ENCODE measurements at regions of chr14 and their contacts with region 1.

Region 1: DNA sequence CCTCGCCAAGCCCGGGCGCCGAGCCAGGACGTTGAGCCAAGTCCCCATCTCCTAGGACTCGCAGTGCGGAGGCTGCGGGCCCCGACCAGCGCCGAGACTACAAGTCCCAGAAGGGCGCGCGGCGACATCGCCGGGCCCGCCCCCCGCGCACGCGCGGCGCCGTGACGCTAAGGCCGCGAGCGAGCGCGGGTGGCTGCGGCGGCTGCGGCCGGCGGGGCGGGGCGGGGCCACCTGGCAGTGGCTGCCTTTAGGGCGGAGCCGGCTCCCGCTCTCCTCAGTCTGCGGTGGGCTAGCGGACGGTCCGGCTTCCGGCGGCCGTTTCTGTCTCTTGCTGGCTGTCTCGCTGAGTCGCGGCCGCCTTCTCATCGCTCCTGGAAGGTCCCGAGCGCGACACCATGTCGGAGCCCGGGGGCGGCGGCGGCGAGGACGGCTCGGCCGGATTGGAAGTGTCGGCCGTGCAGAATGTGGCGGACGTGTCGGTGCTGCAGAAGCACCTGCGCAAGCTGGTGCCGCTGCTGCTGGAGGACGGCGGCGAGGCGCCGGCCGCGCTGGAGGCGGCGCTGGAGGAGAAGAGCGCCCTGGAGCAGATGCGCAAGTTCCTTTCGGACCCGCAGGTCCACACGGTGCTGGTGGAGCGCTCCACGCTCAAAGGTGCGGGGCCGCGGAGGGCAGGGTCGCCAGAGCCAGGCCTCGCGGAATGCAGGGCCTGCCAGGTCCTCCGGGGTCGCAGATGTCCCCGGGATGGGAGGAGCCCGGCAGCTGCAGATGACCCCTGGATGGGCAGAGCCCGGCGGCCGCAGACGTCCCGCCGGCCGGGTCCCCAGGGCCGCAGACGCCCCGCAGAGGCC is at the start of gene DYNC1H1:
- DNase-seq: peak; percentile 98
- ATAC-seq: peak; percentile 84
- H3K4me3 Mint-ChIP-seq: peak within 1 kb of the TSS; percentile 93
- H3K27ac Mint-ChIP-seq: peak within 1 kb of the TSS; percentile 91
- H3K4me1 Mint-ChIP-seq: peaks cover 44% of the 10 kb centered on the region
- H3K27me3 Mint-ChIP-seq: no peaks in the 10 kb centered on the region
- total RNA-seq, gene DYNC1H1: 287 to 316 TPM

Region 2: GRCh38 chr14:101947906-101948665 is 16.4 kb before region 1 on chr14:
- POLR2A ChIA-PET with region 1: interaction called, 18 read pairs
- DNase-seq: peak; percentile 100
- ATAC-seq: peak; percentile 98
- H3K4me3 Mint-ChIP-seq: peak overlapping the region; percentile 90
- H3K27ac Mint-ChIP-seq: peak overlapping the region; percentile 95
- H3K4me1 Mint-ChIP-seq: peaks cover 12% of the 10 kb centered on the region
- H3K27me3 Mint-ChIP-seq: peaks cover 32% of the 10 kb centered on the region

Region 3: GRCh38 chr14:102086972-102087761 is 122.6 kb after region 1 on chr14 and contains the start of gene HSP90AA1:
- POLR2A ChIA-PET with region 1: interaction called, 11 read pairs
- DNase-seq: peak; percentile 98
- ATAC-seq: peak; percentile 69
- H3K4me3 Mint-ChIP-seq: peak within 1 kb of the TSS; percentile 98
- H3K27ac Mint-ChIP-seq: peak within 1 kb of the TSS; percentile 97
- H3K4me1 Mint-ChIP-seq: peaks cover 57% of the 10 kb centered on the region
- H3K27me3 Mint-ChIP-seq: no peaks in the 10 kb centered on the region
- total RNA-seq, gene HSP90AA1: 372 to 398 TPM

Measured in activated naive CD8-positive, alpha-beta T cell treated with anti-CD3 and anti-CD28 coated beads, Interleukin-2, amount 10 ng/mL, durations not matched to agents 7 days and 5 days (primary cell).